ENCODE measurements at regions of chr2 and their contacts with region 1.

Region 1: DNA sequence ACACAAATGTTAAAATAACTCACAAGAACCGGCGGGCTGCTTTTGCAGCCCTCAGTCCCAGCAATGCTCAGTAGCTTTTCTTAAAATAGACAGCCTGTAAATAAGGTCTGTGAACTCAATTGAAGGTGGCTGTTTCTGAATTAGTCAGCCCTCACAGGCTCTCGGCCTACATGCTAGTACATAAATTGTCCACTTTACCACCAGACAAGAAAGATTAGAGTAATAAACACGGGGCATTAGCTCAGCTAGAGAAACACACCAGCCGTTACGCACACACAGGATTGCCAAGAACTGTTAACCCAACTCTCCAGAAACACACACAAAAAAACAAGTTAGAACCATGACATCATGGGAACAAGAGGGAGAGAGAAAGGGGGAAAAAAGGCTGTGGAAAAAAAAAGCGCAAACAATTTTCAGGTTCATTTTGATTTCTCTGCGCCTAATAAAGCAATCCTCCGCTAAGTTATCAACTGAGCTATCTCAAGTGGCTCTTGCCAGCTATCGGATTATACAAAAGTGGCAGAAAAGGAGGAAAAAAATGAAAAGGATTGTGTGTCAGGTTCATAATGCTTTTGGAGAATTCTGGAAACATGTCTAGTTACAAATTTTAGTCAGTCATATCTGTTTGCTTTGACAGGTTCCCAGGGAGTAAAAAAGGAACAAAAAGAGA is 89.1 kb downstream of the ZEB2 start:
- DNase-seq: no peak
- ATAC-seq: peak; percentile 76

Region 2: GRCh38 chr2:144479138-144479537 is 48.3 kb after region 1 on chr2:
- intact Hi-C with region 1: no loop called
- DNase-seq: no peak
- ATAC-seq: peak; percentile 28

Region 3: DNA sequence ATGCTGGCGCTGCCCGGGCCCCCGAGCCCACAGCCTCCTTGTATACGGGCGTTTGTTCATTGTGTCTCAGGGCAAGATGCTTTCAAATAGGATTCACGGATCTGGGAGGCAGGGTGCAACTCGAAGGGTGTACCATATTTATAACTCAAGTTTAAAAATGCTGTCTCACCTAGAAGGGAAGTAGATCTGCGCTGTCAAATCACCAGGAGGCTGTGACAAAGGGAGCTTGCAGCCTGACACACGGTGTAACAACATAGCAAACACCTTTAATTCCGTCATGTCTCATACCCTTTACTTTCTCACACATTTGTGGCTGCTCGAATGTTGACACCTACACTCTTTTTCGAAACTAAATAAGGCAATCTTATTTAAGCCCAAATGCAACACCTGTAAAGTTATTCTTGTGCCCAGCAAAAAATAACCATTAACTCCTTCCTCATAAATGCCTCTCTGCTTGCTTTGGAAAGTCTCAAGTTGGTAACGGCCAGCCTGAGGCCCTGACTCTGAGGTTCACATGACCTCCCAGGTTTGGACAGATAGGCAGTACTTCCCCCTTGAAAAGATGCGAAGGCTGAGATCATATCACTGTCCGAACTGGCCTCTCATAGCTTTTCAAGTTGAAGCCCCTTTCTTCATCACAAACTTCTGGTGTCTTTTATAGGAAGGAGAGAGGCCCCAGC is 77.5 kb after region 1 on chr2:
- intact Hi-C with region 1: loop called (anchors 2 kb)
- DNase-seq: peak; percentile 47
- ATAC-seq: no peak

Region 4: GRCh38 chr2:144567745-144568144 is 136.9 kb after region 1 on chr2:
- intact Hi-C with region 1: no loop called
- DNase-seq: no peak
- ATAC-seq: no peak